HCT116 (cell line): ENCODE measurements at regions of chr1 and their contacts with region 1.

Region 1: DNA sequence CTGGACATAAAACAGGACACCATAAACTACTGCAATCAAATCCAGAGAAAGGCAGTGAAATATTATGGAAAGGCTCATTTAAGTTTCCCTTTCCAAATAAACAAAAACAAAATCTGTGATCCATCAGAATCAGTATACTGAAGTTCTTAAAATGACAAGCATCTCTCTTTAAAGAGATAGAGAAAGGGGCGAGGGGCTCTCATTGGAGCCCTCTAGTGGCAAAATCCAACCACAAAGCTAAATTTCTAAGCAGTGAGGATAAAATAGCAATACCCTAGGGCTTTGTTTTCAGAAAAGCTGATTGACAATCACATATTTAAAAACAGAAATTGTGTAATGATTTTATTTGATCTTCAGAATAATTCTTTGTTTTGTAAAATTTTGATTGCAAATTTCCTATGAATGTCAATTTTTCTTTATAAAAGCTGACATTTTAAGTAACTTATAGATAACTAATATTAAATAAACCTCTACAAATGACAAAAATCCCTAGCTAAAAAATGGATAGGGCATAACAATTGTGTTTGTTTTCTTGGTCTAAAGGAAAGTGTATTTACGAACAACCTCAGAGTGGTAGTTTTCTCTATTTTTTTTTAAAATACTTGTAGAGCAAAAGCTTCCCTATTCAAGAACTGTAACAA is 138.2 kb downstream of the COL24A1 start:
- DNase-seq: peak; percentile 12
- ATAC-seq: peak; percentile 70
- H3K4me3 ChIP-seq: no peak overlapping the region
- H3K27ac ChIP-seq: no peak overlapping the region
- H3K4me1 ChIP-seq: no peaks in the 10 kb centered on the region
- H3K27me3 ChIP-seq: no peaks in the 10 kb centered on the region
- CTCF ChIP-seq: peak; percentile 57 to 88 (median 77); a peak in 5 of 6 replicates
- POLR2A ChIP-seq: no peak
- RAD21 ChIP-seq: peak; percentile 54

Region 2: GRCh38 chr1:85612704-85613361 is 405.6 kb before region 1 on chr1:
- CTCF ChIA-PET with region 1: interaction called, 5 read pairs
- POLR2A ChIA-PET with region 1: no interaction called
- RAD21 ChIA-PET with region 1: no interaction called
- intact Hi-C with region 1: loop called (anchors 1 kb)
- DNase-seq: no peak
- ATAC-seq: peak; percentile 72
- H3K4me3 ChIP-seq: no peak overlapping the region
- H3K27ac ChIP-seq: no peak overlapping the region
- H3K4me1 ChIP-seq: peaks cover 26 to 46% of the 10 kb centered on the region in 2 experiments
- H3K27me3 ChIP-seq: no peaks in the 10 kb centered on the region
- CTCF ChIP-seq: peak; percentile 46 to 85 (median 72); a peak in 5 of 6 replicates
- POLR2A ChIP-seq: no peak
- RAD21 ChIP-seq: peak; percentile 79

Region 3: GRCh38 chr1:85846709-85847108 is 171.7 kb before region 1 on chr1:
- CTCF ChIA-PET with region 1: no interaction called
- POLR2A ChIA-PET with region 1: no interaction called
- RAD21 ChIA-PET with region 1: no interaction called
- intact Hi-C with region 1: no loop called
- DNase-seq: no peak
- ATAC-seq: no peak
- H3K4me3 ChIP-seq: no peak overlapping the region
- H3K27ac ChIP-seq: no peak overlapping the region
- H3K4me1 ChIP-seq: peaks cover 22 to 23% of the 10 kb centered on the region in 2 experiments
- H3K27me3 ChIP-seq: no peaks in the 10 kb centered on the region
- CTCF ChIP-seq: no peak
- POLR2A ChIP-seq: no peak
- RAD21 ChIP-seq: no peak